Left ventricle myocardium inferior (tissue), 1 donor: ENCODE measurements at regions of chr9 and their contacts with region 1.

Region 1: GRCh38 chr9:72763022-72763421 is 189.8 kb downstream of the ALDH1A1 start:
- DNase-seq: no peak
- H3K4me3 ChIP-seq: no peak overlapping the region
- H3K27ac ChIP-seq: no peak overlapping the region
- H3K4me1 ChIP-seq: no peaks in the 10 kb centered on the region
- H3K27me3 ChIP-seq: peaks cover 3% of the 10 kb centered on the region
- CTCF ChIP-seq: no peak

Region 2: DNA sequence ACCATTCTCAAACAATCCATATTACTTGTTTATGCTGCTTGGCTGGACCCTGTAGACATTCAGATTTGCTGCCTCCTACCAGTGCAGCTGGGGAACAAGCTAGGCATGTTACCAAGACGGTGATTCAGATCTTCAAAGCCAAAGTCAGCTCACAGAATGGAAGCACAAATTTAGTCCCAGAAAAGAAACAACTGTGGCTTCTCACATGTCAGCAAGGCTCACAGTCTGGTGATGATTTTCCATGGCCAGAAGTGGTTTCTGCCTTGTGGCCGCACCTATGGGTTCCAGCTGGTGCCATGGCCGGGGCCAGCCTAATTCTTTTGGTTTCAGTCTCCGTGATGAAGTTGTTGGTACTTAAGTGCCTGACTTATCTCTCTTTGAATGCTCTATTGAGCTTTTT is 59.4 kb before region 1 on chr9:
- intact Hi-C with region 1: loop called (anchors 10 kb)
- DNase-seq: no peak
- H3K4me3 ChIP-seq: no peak overlapping the region
- H3K27ac ChIP-seq: no peak overlapping the region
- H3K4me1 ChIP-seq: no peaks in the 10 kb centered on the region
- H3K27me3 ChIP-seq: no peaks in the 10 kb centered on the region
- CTCF ChIP-seq: no peak